Dorsolateral prefrontal cortex (tissue), 120 donors: ENCODE measurements at regions of chr3 and their contacts with region 1.

Region 1: DNA sequence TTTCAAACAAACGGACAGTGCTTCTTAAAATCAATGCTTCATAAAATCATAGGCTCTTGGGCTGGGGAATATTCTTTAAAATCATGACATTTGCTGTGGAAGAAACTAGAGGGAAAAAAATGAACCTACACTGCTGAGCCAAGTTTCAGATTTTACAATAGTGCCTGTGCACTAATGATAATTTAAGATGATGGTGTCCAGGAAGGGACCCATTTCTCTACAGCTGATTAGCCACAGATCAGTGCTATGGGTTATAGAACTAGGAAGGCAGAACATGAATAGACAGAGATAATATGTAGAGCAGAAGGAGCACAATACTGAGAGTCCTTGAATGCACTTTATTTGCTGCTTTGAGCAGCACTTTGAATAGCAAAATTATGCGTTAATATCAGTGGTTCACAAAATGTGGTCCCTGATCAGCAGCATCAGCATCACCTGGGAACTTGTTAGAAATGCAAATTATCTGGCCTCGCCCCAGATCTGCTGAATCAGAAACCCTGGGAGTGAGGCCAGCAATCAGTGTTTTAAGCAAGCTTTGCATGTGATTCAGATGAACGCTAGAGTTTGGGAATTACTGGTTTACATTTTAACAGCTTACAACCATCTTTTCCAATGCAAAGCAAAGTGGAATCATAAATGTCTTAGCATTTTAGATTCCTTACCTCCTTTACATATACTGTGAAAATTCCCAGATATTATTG is 135.8 kb upstream of the ANKRD28 start:
- DNase-seq: peak in 6 of 10 donors; percentile 36 to 73 (median 52)
- H3K4me3 ChIP-seq: no peak overlapping the region
- H3K27ac ChIP-seq: peak overlapping the region; percentile 28 to 93 (median 84)
- H3K27me3 ChIP-seq: no peaks in the 10 kb centered on the region
- CTCF ChIP-seq: no peak

Region 2: GRCh38 chr3:15892311-15893227 is 41.0 kb before region 1 on chr3:
- intact Hi-C with region 1: loop called in 1 of 2 experiments (anchors 5 kb)
- DNase-seq: no peak
- H3K4me3 ChIP-seq: no peak overlapping the region
- H3K27ac ChIP-seq: peak overlapping the region in 9 of 59 donors; percentile 5 to 60 (median 34)
- H3K27me3 ChIP-seq: no peaks in the 10 kb centered on the region
- CTCF ChIP-seq: no peak

Region 3: GRCh38 chr3:16130066-16130465 is 196.5 kb after region 1 on chr3:
- intact Hi-C with region 1: loop called in 1 of 2 experiments (anchors 10 kb)
- DNase-seq: no peak
- H3K4me3 ChIP-seq: no peak overlapping the region
- H3K27ac ChIP-seq: peak overlapping the region in 16 of 59 donors; percentile 5 to 64 (median 24)
- H3K27me3 ChIP-seq: no peaks in the 10 kb centered on the region
- CTCF ChIP-seq: no peak